Activated T-helper 2 cell treated with anti-CD3 and anti-CD28 coated beads, Interferon-gamma antibody, Interleukin-2, Interleukin-4, amounts not matched to agents 10 μg/mL and 5 μg/mL and 100 μg/mL, durations not matched to agents 14 hours and 24 hours and 36 hours (primary cell): ENCODE measurements at regions of chr5 and their contacts with region 1.

Region 1: GRCh38 chr5:43484106-43484849 is 613 bp upstream of the TMEM267 start:
- DNase-seq: peak; percentile 87
- H3K4me3 Mint-ChIP-seq: peak overlapping the region; percentile 93
- H3K27ac Mint-ChIP-seq: peak overlapping the region; percentile 99
- H3K4me1 Mint-ChIP-seq: peaks cover 41% of the 10 kb centered on the region
- H3K27me3 Mint-ChIP-seq: no peaks in the 10 kb centered on the region

Region 2: DNA sequence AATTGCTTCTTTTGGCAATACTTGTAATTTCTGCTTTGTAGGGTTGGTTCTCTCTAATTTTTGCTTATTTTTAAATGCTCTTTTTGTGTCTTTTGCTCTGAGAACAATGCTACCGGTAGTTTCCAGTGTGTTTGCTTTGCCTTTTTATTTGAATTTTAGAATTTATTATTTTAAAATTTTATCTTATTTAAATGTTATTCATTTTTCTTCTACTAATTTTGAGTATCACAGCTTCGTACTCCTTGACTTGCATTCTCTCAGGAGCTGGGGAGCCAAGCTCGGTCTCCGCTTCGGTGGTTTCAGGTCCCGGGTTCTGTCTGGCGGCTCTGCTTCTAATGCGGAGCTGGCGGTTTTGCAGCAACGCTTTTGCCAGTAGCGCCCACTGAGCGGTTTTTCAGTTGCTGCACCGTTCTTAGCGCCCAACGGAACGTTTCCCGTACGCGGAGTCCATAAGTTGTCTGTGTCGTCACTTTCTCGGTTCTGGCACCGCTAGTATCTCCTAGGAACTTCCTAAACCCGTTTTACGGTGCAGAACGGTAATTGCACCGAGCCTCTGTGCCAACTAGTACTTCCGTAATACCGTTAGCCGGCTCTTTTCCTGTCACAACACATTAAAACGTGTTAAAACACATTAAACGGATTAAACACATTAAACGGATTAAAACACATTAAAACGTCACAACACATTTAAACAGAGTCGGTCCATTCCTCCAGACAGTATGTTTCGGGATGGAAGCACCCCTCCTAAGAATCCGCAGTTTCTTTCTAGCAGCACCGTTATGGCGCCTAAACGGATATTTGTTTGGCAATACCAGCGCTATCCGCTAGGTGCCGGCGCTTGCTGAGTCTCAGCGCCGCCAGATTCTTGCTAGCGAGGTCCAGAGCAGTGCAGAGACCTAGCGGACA is 489.8 kb before region 1 on chr5:
- intact Hi-C with region 1: loop called (anchors 1 kb)
- DNase-seq: peak; percentile 86
- H3K4me3 Mint-ChIP-seq: peak overlapping the region; percentile 100
- H3K27ac Mint-ChIP-seq: peak overlapping the region; percentile 100
- H3K4me1 Mint-ChIP-seq: peaks cover 32% of the 10 kb centered on the region
- H3K27me3 Mint-ChIP-seq: no peaks in the 10 kb centered on the region

Region 3: GRCh38 chr5:43066799-43067741 is 417.2 kb before region 1 on chr5:
- intact Hi-C with region 1: loop called (anchors 2 kb)
- DNase-seq: peak; percentile 85
- H3K4me3 Mint-ChIP-seq: peak overlapping the region; percentile 91
- H3K27ac Mint-ChIP-seq: peak overlapping the region; percentile 97
- H3K4me1 Mint-ChIP-seq: peaks cover 32% of the 10 kb centered on the region
- H3K27me3 Mint-ChIP-seq: no peaks in the 10 kb centered on the region

Region 4: DNA sequence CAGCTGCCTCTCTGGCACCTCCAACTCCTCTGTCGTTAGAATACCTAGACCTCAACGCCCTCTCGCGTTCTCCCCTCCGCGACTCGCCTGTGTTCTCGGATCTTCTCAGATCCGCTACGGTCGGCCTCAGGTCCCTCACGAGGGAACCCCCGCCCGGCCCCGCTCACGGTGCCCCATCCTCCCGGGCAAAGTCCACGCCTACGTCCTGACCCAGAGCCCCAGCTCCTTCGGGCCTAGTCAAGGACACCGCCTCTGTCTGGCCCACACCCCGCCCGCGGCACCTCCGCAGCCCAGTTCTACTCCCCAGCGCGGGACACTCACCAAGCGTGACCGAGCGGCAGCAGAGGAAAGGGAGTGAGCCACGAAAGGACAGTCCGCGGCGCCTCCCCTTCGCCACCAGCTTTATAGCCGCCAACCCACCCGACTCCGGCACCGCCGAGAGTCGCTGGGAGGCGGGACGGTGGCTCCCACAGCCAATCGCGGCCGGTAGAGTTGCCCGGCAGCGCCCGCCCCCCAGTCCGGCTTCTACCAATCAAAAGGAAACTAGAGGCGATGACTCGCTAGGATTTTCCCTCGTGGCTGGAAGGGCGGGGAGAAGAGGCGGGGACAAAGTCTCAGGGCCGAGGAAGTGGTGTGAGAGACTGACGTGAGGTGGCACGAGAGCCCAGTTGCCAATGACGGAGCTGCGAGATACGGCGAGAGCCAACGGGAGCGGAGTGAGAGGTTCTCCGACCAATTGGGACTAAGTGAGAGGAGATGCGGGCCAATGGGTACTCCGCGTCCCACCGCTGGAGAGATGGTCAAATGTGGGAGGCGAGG is 171.0 kb before region 1 on chr5 and contains the start of gene HMGCS1:
- intact Hi-C with region 1: loop called (anchors 2 kb)
- DNase-seq: peak; percentile 99
- H3K4me3 Mint-ChIP-seq: peak within 1 kb of the TSS; percentile 98
- H3K27ac Mint-ChIP-seq: peak within 1 kb of the TSS; percentile 95
- H3K4me1 Mint-ChIP-seq: peaks cover 67% of the 10 kb centered on the region
- H3K27me3 Mint-ChIP-seq: no peaks in the 10 kb centered on the region
- total RNA-seq, gene HMGCS1: 232 and 233 TPM in 2 replicates

Region 5: DNA sequence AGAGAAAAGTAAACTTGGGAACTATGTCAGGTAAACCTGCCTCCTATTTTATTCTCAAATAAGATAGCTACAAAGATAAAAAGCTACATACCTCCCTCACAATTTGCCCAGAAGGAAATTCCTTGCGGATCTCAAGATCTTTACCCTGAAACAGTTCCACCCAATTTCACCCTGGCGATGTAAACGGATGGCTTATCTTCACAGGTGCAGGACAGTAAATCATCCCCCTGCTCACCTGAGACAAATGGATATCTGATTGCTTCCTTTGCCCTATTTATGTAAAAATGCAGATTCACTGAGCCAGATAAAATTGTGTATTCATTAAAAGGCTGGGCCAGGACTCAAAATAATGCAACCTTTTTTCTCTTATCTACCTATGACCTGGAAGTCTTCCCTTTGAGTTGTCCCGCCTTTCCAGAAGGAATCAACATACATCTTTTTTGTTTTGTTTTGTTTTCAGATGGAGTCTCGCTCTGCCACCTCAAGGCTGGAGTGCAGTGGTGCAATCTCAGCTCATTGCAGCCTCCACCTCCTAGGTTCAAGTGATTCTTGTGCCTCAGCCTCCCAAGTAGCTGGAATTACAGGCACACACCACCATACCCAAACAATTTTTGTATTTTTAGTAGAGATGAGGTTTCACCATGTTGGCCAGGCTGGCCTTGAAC is 14.4 kb before region 1 on chr5:
- intact Hi-C with region 1: no loop called
- DNase-seq: no peak
- H3K4me3 Mint-ChIP-seq: no peak overlapping the region
- H3K27ac Mint-ChIP-seq: no peak overlapping the region
- H3K4me1 Mint-ChIP-seq: peaks cover 4% of the 10 kb centered on the region
- H3K27me3 Mint-ChIP-seq: no peaks in the 10 kb centered on the region

Region 6: DNA sequence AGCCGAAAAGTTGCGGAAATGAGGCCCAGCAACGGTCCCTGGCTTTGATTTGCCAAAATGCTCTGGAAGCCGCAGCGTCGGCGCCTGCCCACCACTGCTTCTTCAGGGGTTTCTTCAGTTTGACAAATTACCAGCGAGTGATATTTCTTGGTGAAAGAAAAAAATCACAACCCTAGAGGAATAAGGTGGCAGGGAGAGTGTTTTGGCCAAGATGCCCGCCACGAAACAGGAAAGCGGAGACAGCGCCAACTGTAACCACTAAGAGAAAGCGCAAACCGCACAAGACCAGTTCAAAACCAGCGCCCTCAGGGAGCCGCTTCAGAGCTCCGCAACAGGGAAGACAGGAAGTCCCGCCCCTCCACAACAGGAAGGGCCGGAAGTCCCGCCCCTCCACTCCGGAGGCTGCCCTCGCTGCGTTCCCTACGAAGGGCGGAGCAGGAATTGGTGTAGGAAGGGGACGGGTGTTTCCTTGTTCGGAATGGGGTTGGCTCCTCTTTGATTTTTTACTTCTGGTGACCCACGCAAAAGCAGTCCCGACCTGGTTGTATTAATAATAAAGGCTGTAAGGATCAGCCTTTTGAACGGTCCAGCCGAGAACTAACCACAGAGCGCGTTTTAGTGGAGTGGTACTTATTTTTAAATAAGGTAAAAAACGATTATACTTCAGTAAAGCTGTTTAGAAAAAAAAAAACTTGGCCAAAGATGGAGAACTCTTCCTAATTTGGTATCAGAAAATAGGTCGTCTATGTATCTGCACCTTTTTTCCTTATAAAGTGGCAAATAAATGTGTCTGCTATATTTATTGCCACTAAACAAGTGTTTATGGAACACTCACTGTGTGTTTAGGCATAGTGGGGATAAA is 30.8 kb after region 1 on chr5 and contains the start of gene C5orf34:
- intact Hi-C with region 1: loop called (anchors 1 kb)
- DNase-seq: peak; percentile 91
- H3K4me3 Mint-ChIP-seq: peak within 1 kb of the TSS; percentile 92
- H3K27ac Mint-ChIP-seq: peak within 1 kb of the TSS; percentile 96
- H3K4me1 Mint-ChIP-seq: peaks cover 34% of the 10 kb centered on the region
- H3K27me3 Mint-ChIP-seq: no peaks in the 10 kb centered on the region
- total RNA-seq, gene C5orf34: 6.3 and 8.3 TPM in 2 replicates

Region 7: GRCh38 chr5:43530648-43531047 is 46.4 kb after region 1 on chr5:
- intact Hi-C with region 1: no loop called
- DNase-seq: no peak
- H3K4me3 Mint-ChIP-seq: no peak overlapping the region
- H3K27ac Mint-ChIP-seq: no peak overlapping the region
- H3K4me1 Mint-ChIP-seq: peaks cover 18% of the 10 kb centered on the region
- H3K27me3 Mint-ChIP-seq: no peaks in the 10 kb centered on the region

Region 8: DNA sequence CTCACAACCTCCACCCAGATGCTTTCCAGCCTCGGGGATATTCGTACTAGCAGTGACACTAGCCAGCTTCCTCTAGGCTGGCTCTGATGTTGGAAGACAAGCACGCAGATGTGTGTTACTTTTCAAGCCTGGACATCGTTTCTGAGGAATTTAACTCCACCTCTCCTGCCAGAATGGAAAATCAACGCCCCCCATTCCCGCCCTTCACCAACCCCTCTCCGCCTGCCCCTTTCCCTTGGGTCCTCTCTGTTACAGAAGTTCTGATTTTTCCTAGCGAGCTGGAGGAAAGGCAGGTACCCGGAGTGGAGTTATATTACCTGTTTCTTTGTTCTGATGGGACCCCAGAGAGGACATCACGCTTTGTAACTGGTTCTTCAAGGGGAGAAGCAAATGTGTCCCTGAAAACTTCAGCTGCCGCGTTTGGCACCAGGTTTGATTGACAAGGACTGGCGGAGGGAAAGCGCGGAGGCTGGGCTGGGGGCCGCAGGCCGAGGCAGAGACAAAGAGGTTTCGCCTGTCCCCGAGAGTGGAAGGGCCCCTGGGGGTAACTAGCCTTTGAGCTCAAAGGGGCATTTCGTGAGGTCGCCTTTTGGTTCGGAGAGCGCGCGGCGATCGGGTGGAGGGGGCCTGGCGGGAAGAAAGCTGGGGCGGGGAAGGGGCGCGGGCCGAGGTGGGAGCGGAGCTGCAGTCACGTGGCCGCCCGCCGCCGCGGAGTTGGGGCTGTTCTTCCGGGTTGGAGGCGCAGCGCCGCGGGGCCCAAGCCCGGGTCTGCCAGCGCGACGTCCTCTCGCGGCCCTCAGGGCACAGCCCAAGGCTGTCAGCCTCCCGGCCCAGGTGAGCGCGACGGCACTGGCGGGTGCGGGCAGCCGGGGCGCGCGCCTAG is 118.4 kb after region 1 on chr5 and contains the start of gene NNT:
- intact Hi-C with region 1: loop called (anchors 1 kb)
- DNase-seq: peak; percentile 75
- H3K4me3 Mint-ChIP-seq: peak within 1 kb of the TSS; percentile 87
- H3K27ac Mint-ChIP-seq: peak within 1 kb of the TSS; percentile 82
- H3K4me1 Mint-ChIP-seq: peaks cover 23% of the 10 kb centered on the region
- H3K27me3 Mint-ChIP-seq: no peaks in the 10 kb centered on the region
- total RNA-seq, gene NNT: 64.1 and 64.8 TPM in 2 replicates